ENCODE measurements at regions of chr2 and their contacts with region 1.

Region 1: GRCh38 chr2:203484266-203485112 is 50.6 kb downstream of the RAPH1 start:
- DNase-seq: peak; percentile 67
- ATAC-seq: peak; percentile 96
- H3K4me3 Mint-ChIP-seq: no peak overlapping the region
- H3K27ac Mint-ChIP-seq: peak overlapping the region; percentile 13
- H3K4me1 Mint-ChIP-seq: peaks cover 7% of the 10 kb centered on the region
- H3K27me3 Mint-ChIP-seq: no peaks in the 10 kb centered on the region
- CTCF ChIP-seq: peak; percentile 79

Region 2: GRCh38 chr2:203650860-203651613 is 166.5 kb after region 1 on chr2:
- CTCF ChIA-PET with region 1: interaction called, 8 read pairs
- POLR2A ChIA-PET with region 1: no interaction called
- intact Hi-C with region 1: loop called (anchors 5 kb)
- DNase-seq: no peak
- ATAC-seq: peak; percentile 84
- H3K4me3 Mint-ChIP-seq: no peak overlapping the region
- H3K27ac Mint-ChIP-seq: no peak overlapping the region
- H3K4me1 Mint-ChIP-seq: peaks cover 18% of the 10 kb centered on the region
- H3K27me3 Mint-ChIP-seq: no peaks in the 10 kb centered on the region
- CTCF ChIP-seq: peak; percentile 39

Region 3: GRCh38 chr2:203824057-203824456 is 339.6 kb after region 1 on chr2:
- CTCF ChIA-PET with region 1: no interaction called
- POLR2A ChIA-PET with region 1: no interaction called
- intact Hi-C with region 1: no loop called
- DNase-seq: peak; percentile 59
- ATAC-seq: peak; percentile 77
- H3K4me3 Mint-ChIP-seq: no peak overlapping the region
- H3K27ac Mint-ChIP-seq: peak overlapping the region; percentile 50
- H3K4me1 Mint-ChIP-seq: peaks cover 30% of the 10 kb centered on the region
- H3K27me3 Mint-ChIP-seq: no peaks in the 10 kb centered on the region
- CTCF ChIP-seq: no peak

Region 4: DNA sequence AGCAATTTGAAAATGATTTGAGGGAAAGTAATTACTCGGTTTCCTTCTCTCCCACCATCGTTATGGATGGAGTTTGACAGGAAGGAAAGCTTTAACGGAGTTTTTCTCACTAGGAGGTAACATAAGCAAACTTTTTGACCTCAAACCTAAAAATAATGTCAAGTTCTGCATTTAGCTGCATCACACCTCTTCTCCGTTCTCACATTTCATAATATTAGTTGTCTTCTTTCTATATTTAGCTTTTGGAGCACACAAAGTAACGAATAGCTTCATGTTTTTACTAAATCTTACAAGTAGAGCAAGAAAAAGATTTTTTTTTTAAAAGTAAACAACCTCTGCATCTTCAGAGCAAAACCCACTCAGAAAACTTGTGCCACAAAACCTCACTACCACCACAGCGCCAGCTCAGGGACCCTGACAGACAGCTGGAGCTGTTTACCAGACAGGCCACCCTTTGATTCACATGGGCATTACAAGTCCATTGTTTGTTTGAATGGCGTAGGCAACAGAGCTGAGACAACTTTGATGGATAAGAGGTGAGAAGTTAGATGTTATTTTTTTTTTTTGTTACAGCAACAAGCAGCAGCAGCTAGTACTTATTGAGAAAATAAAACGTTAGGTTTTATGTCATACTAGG is 430.2 kb after region 1 on chr2:
- CTCF ChIA-PET with region 1: no interaction called
- POLR2A ChIA-PET with region 1: no interaction called
- intact Hi-C with region 1: loop called (anchors 5 kb)
- DNase-seq: peak; percentile 54
- ATAC-seq: peak; percentile 42
- H3K4me3 Mint-ChIP-seq: no peak overlapping the region
- H3K27ac Mint-ChIP-seq: no peak overlapping the region
- H3K4me1 Mint-ChIP-seq: peaks cover 32% of the 10 kb centered on the region
- H3K27me3 Mint-ChIP-seq: peaks cover 5% of the 10 kb centered on the region
- CTCF ChIP-seq: no peak

Measured in activated CD8-positive, alpha-beta T cell treated with anti-CD3 and anti-CD28 coated beads for 36 hours (primary cell).